Activated CD8-positive, alpha-beta T cell treated with anti-CD3 and anti-CD28 coated beads for 36 hours (primary cell): ENCODE measurements at regions of chr10 and their contacts with region 1.

Region 1: GRCh38 chr10:35195361-35196306 is 69.0 kb downstream of the CREM start:
- DNase-seq: peak; percentile 93
- ATAC-seq: peak; percentile 88
- H3K4me3 Mint-ChIP-seq: peak overlapping the region; percentile 90
- H3K27ac Mint-ChIP-seq: peak overlapping the region; percentile 100
- H3K4me1 Mint-ChIP-seq: peaks cover 42% of the 10 kb centered on the region
- H3K27me3 Mint-ChIP-seq: no peaks in the 10 kb centered on the region
- CTCF ChIP-seq: peak; percentile 94

Region 2: GRCh38 chr10:35119378-35119777 is 76.3 kb before region 1 on chr10:
- CTCF ChIA-PET with region 1: interaction called, 41 read pairs
- POLR2A ChIA-PET with region 1: interaction called, 8 read pairs
- intact Hi-C with region 1: no loop called
- DNase-seq: no peak
- ATAC-seq: no peak
- H3K4me3 Mint-ChIP-seq: no peak overlapping the region
- H3K27ac Mint-ChIP-seq: no peak overlapping the region
- H3K4me1 Mint-ChIP-seq: peaks cover 15% of the 10 kb centered on the region
- H3K27me3 Mint-ChIP-seq: no peaks in the 10 kb centered on the region
- CTCF ChIP-seq: no peak

Region 3: DNA sequence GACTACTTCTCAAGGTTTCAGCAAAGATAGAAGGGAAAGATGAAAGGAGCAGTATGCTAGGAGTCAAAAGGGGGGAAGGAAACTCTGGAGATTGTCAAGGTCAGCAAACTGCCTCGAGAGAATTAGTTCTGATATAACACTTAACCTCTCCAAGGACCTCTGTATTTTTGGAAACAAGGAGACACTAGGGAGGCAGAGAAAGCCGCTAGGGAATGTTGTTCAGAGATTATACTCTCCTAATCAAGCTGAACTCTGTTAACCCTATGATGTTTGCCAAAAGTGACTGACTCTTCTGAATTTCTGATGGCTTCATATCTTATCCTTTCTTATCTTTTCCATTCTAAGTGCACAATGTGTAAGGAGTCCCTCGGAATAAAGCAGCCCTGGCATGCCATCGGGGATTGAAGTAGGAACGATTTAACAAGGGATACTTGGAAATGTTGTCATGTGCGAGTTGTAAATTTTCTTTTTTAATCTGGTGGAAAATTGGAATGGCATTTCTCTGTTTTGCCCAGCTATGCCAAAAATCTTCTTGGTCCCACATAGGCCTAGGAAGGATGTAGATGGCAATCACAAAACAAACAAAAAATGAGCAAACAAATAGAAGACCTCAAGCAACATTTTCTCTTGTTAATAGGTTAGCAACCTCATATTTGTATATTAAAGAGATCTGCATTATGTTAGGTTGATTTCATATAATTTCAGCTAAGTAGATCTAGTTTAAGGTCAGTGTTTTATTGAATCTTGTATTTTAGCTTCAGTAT is 41.7 kb before region 1 on chr10:
- CTCF ChIA-PET with region 1: interaction called, 32 read pairs
- POLR2A ChIA-PET with region 1: interaction called, 34 read pairs
- intact Hi-C with region 1: loop called (anchors 1 kb)
- DNase-seq: no peak
- ATAC-seq: no peak
- H3K4me3 Mint-ChIP-seq: no peak overlapping the region
- H3K27ac Mint-ChIP-seq: no peak overlapping the region
- H3K4me1 Mint-ChIP-seq: peaks cover 39% of the 10 kb centered on the region
- H3K27me3 Mint-ChIP-seq: no peaks in the 10 kb centered on the region
- CTCF ChIP-seq: no peak

Region 4: GRCh38 chr10:35208536-35208935 is 12.9 kb after region 1 on chr10:
- CTCF ChIA-PET with region 1: interaction called, 33 read pairs
- POLR2A ChIA-PET with region 1: interaction called, 10 read pairs
- intact Hi-C with region 1: no loop called
- DNase-seq: peak; percentile 81
- ATAC-seq: peak; percentile 92
- H3K4me3 Mint-ChIP-seq: peak overlapping the region; percentile 53
- H3K27ac Mint-ChIP-seq: peak overlapping the region; percentile 88
- H3K4me1 Mint-ChIP-seq: peaks cover 29% of the 10 kb centered on the region
- H3K27me3 Mint-ChIP-seq: no peaks in the 10 kb centered on the region
- CTCF ChIP-seq: no peak

Region 5: DNA sequence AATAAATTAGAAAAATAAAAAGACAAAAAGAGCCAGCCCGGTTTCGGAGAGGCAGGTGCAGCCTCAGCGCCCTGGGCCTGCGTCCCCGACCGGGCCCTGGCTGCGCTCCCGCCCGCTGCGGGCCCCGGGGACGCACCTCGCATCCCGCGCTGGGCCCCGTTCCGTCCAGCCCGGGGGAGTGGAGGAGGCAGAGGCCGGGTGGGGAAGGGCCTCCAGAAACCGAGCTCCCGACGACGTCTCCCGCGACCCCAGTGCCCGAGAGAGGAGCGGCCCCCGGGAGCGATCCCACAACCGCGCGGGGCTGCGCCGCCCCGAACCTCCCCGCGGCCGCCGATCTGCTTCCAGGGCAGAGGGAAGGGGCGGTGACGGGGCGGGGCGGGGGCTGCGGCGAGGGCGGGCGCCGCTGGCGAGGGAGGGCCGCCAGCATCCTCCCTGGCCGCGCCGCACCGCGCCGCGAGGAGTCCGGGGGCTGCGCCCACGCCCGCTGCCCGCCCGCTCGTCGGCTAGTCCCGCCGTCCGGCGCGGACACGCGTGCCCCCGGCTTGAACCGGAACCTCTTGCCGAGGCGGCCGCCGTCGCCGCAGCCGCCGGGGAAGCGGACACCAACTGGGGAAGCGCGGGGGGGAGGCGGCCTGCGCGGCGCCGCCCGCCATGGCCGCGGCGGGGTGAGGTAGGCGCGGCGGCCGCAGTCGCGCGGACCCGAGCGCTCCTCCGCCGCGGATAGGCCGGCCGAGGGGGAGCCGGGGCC is 140.6 kb after region 1 on chr10 and contains the start of gene CCNY:
- CTCF ChIA-PET with region 1: interaction called, 3 read pairs
- POLR2A ChIA-PET with region 1: interaction called, 5 read pairs
- intact Hi-C with region 1: loop called (anchors 5 kb)
- DNase-seq: peak; percentile 78
- ATAC-seq: peak; percentile 67
- H3K4me3 Mint-ChIP-seq: peak within 1 kb of the TSS; percentile 92
- H3K27ac Mint-ChIP-seq: peak within 1 kb of the TSS; percentile 90
- H3K4me1 Mint-ChIP-seq: peaks cover 59% of the 10 kb centered on the region
- H3K27me3 Mint-ChIP-seq: no peaks in the 10 kb centered on the region
- CTCF ChIP-seq: no peak
- total RNA-seq, gene CCNY: 42.2 to 48.8 TPM